ENCODE measurements at regions of chr1 and their contacts with region 1.

Region 1: DNA sequence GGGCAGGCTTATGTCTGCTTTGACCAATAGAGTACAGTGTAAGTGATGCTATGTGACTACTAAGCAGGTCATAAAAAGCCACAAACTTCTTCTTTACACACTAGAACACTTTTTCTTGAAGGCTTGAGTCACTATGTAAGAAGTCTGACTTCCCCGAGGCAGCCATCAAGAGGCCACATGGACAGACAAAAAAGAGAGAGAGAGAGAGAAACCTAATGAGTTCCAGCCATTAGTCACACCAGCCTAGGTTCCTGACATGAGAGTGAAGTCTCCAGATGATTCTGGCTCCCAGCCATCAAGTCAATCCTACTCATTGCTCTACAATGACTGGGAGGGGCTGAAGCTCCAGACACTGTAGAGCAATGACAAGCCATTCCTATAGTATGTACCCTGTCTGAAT is 101.4 kb downstream of the LHX9 start:
- DNase-seq: peak; percentile 98
- H3K4me3 Mint-ChIP-seq: no peak overlapping the region
- H3K27ac Mint-ChIP-seq: peak overlapping the region; percentile 40
- H3K4me1 Mint-ChIP-seq: peaks cover 15% of the 10 kb centered on the region
- H3K27me3 Mint-ChIP-seq: no peaks in the 10 kb centered on the region
- CTCF ChIP-seq: no peak

Region 2: GRCh38 chr1:197937892-197938291 is 80.6 kb before region 1 on chr1:
- CTCF ChIA-PET with region 1: no interaction called
- POLR2A ChIA-PET with region 1: no interaction called
- intact Hi-C with region 1: loop called (anchors 5 kb)
- DNase-seq: no peak
- H3K4me3 Mint-ChIP-seq: no peak overlapping the region
- H3K27ac Mint-ChIP-seq: no peak overlapping the region
- H3K4me1 Mint-ChIP-seq: no peaks in the 10 kb centered on the region
- H3K27me3 Mint-ChIP-seq: no peaks in the 10 kb centered on the region
- CTCF ChIP-seq: no peak